ENCODE measurements at regions of chr14 and their contacts with region 1.

Region 1: DNA sequence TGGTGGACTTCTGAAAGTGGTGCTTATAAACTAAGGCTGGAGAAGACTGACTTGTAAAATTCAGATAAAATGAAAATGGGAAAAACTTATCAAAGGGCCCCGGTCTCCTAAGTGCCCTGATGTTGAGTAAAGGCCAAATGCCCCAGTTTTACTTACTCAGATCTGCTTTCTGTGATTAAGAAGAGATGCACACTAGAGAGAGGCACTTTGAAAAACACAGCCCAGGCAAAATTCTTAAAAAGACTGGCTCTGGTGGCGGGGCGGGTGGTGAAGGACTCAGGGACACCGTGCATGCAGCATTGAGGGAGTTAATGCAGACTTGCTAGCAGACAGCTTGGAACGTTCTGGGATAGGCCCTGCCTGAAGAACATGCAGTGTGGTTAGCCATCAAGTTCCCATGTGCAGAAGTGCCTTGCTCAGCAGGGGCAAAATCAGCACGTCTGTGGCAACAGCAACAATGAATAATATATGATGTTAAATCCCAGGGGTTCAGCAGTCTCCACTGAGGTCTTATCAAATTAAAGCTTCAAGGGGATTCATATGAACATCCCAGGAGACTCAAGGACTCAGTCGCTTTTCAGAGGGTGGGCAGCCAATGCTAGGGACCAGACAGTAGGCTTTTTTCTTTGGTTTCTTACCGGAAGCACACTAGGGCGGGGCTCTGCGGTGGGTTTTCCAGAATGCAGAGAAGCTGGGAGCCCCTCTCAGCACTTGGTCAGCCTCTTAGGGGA is 105.0 kb downstream of the DAD1 start:
- DNase-seq: no peak
- ATAC-seq: peak; percentile 20

Region 2: GRCh38 chr14:22432348-22432976 is 51.6 kb before region 1 on chr14:
- intact Hi-C with region 1: loop called (anchors 5 kb)
- DNase-seq: no peak
- ATAC-seq: peak; percentile 78

Region 3: DNA sequence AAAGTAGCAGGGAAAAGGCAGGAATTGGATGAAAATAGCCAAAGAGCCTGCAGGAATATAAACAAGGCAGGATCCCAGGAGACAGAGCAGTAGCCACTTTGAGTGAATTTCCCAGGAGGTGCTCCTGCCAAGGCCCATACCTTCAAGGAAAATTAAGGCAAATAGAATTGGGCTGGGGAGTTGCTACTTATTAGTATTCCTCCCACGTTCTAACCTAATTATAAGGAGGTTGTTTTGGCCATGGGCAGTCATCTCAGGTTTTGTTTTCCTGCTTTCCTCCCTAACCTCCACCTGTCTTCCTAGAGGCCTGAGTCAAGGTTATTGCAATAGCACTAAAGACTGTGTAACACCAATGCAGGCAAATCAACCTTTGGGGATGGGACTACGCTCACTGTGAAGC is 31.9 kb after region 1 on chr14:
- intact Hi-C with region 1: loop called (anchors 2 kb)
- DNase-seq: no peak
- ATAC-seq: no peak

Region 4: GRCh38 chr14:22545842-22546721 is 62.1 kb after region 1 on chr14:
- intact Hi-C with region 1: no loop called
- DNase-seq: no peak
- ATAC-seq: no peak